Activated CD8-positive, alpha-beta memory T cell treated with anti-CD3 and anti-CD28 coated beads, Interleukin-2, amount 10 ng/mL, durations not matched to agents 7 days and 5 days (primary cell): ENCODE measurements at regions of chr3 and their contacts with region 1.

Region 1: DNA sequence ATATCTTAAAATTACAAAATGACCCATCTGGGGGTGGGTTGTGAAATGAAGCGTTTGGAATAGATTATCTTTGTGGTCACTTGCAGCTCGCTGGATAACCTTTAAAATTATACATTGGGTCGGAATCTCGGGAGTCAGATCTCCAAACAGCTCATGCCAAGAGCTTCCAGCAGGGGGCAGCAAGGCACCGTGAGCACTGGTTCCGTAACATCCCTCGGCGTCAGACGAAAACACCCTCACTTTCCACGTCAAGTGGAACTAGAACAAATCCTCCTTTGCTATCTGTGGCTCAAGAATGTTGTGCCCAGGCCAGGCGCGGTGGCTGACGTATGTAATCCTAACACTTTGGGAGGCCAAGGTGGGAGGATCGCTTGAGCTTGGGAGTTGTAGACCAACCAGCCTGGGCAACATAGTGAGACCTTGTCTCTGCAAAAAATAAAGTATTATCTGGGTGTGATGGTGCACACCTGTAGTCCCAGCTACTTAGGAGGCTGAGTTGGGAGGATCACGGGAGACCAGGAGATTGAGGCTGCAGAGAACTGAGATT is 31.1 kb downstream of the UMPS start:
- DNase-seq: peak; percentile 82
- ATAC-seq: peak; percentile 90
- H3K4me3 Mint-ChIP-seq: peak overlapping the region; percentile 42
- H3K27ac Mint-ChIP-seq: no peak overlapping the region
- H3K4me1 Mint-ChIP-seq: peaks cover 4% of the 10 kb centered on the region
- H3K27me3 Mint-ChIP-seq: peaks cover 3% of the 10 kb centered on the region

Region 2: DNA sequence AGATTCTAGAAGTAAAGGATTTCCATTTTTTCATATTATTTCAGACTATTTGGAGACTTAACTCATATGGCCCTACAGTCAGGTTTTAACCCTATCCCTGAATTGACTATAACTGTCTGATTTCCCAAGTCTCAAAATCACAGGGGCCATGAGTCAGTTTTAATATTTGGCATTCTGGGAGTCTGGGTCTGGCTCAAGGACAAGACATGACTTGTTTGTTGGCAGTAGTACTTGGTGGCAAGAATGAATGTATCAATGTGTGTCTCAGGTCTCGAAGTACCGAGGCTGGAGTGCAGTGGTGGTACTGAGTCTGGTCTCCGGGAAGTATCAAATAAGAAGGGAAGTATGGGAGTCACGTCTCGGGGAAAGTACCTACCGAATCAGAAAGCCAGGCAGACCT is 20.3 kb before region 1 on chr3:
- CTCF ChIA-PET with region 1: interaction called, 11 read pairs
- DNase-seq: no peak
- ATAC-seq: no peak
- H3K4me3 Mint-ChIP-seq: no peak overlapping the region
- H3K27ac Mint-ChIP-seq: no peak overlapping the region
- H3K4me1 Mint-ChIP-seq: peaks cover 6% of the 10 kb centered on the region
- H3K27me3 Mint-ChIP-seq: no peaks in the 10 kb centered on the region

Region 3: GRCh38 chr3:124786441-124787241 is 25.3 kb after region 1 on chr3:
- CTCF ChIA-PET with region 1: interaction called, 22 read pairs
- DNase-seq: no peak
- ATAC-seq: no peak
- H3K4me3 Mint-ChIP-seq: no peak overlapping the region
- H3K27ac Mint-ChIP-seq: no peak overlapping the region
- H3K4me1 Mint-ChIP-seq: peaks cover 10% of the 10 kb centered on the region
- H3K27me3 Mint-ChIP-seq: peaks cover 6% of the 10 kb centered on the region

Region 4: DNA sequence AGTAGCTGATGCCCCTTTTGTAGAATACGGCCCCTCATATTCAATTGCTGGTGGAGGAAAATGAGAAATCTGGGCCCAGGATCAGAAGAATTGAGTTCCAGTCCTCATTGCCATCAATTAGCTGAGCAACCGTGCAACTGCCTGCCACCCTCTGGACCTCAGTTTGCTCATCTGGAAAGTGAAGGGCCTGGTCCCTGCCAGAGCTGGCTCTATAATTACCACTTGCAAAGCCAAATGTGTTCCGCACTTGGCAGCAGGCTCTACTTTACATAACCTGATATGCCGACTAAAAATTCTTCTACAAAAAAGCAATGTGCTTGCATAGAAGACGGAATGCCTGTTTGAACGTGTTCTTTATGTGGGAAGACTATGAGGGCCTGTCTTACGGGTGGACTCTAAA is 134.4 kb after region 1 on chr3:
- CTCF ChIA-PET with region 1: interaction called, 166 read pairs
- DNase-seq: no peak
- ATAC-seq: no peak
- H3K4me3 Mint-ChIP-seq: no peak overlapping the region
- H3K27ac Mint-ChIP-seq: no peak overlapping the region
- H3K4me1 Mint-ChIP-seq: peaks cover under 1% of the 10 kb centered on the region
- H3K27me3 Mint-ChIP-seq: peaks cover 11% of the 10 kb centered on the region

Region 5: GRCh38 chr3:125357032-125357658 is 595.8 kb after region 1 on chr3:
- CTCF ChIA-PET with region 1: no interaction called
- DNase-seq: peak; percentile 52
- ATAC-seq: peak; percentile 89
- H3K4me3 Mint-ChIP-seq: peak overlapping the region; percentile 60
- H3K27ac Mint-ChIP-seq: peak overlapping the region; percentile 10
- H3K4me1 Mint-ChIP-seq: peaks cover 26% of the 10 kb centered on the region
- H3K27me3 Mint-ChIP-seq: no peaks in the 10 kb centered on the region

Region 6: DNA sequence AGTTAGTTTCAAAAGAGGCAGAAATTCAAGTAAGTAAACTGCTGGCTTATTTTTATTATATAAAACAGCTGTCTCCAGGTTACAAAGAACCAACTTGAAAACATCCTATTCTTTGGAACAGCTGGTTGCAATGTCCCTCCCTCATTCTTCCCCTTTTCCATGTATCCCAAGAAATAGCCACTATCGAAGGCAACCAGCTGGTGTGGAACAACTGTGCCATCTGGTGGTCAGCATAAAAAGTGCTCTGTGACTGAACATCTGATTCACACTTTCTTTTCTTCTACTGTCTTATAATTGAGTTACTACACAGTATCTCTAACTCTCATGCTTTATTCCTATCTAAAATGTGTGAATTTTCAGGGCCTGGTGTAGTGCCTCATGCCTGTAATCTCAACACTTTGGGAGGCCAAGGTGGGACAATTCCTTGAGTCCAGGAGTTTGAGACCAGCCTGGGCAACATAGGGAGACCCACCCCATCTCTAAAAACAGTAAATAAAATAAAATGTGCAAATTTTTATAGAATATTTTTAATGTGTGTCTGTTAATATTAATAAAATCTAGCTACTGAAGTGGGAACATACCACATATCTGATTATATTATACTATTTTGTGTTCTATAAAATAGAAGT is 824.4 kb after region 1 on chr3:
- CTCF ChIA-PET with region 1: interaction called, 14 read pairs
- DNase-seq: peak; percentile 56
- ATAC-seq: peak; percentile 66
- H3K4me3 Mint-ChIP-seq: no peak overlapping the region
- H3K27ac Mint-ChIP-seq: no peak overlapping the region
- H3K4me1 Mint-ChIP-seq: peaks cover 15% of the 10 kb centered on the region
- H3K27me3 Mint-ChIP-seq: no peaks in the 10 kb centered on the region